GM10248 (cell line): ENCODE measurements at regions of chr20 and their contacts with region 1.

Region 1: DNA sequence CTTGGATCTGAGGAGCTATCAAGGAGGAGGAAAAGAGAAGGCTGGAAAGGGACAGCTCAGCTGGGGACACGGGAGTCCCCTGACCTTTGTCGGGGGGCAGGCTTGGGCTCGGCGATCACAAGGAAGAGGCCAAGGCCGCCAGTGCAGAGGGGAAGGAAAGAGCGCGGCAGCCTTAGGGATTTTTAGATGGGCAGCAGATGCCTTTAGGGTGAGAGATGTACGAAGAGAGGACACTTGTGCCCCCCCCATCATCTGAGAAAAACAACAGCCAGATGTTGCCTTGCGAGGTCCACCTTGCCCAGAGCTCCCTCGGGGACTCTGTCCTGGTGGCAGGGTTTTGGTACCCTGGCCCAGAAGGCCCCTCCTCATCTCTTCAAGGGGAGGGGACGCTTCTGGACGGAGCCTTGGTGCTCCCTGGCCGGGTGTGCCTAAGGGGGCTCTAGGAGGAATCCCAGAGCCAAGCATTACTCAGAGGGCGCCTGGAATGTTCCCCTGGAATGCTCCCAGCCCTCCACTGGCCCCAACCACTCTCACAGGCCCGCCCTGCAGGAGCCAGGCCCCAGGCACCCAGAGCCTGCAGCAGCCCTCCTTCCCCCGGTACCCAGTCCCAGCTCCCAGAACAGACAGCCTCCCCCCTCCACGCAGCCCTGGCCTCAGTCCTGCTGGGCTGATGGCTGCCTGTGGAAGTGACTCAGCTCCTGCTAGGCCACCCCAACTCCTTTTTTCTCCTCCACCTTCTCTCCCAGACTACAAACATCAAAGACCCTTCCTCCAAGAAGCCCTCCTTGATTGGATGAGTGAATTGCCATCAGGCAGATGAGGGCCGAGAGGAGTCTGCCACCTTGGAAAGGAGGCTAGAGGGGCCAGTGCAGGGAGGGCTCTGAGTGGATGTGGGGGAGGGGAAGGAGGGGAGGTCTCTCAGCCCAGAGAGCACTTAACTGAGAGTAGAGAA is 1.8 kb downstream of the ADAM33 start:
- DNase-seq: no peak
- CTCF ChIP-seq: no peak

Region 2: DNA sequence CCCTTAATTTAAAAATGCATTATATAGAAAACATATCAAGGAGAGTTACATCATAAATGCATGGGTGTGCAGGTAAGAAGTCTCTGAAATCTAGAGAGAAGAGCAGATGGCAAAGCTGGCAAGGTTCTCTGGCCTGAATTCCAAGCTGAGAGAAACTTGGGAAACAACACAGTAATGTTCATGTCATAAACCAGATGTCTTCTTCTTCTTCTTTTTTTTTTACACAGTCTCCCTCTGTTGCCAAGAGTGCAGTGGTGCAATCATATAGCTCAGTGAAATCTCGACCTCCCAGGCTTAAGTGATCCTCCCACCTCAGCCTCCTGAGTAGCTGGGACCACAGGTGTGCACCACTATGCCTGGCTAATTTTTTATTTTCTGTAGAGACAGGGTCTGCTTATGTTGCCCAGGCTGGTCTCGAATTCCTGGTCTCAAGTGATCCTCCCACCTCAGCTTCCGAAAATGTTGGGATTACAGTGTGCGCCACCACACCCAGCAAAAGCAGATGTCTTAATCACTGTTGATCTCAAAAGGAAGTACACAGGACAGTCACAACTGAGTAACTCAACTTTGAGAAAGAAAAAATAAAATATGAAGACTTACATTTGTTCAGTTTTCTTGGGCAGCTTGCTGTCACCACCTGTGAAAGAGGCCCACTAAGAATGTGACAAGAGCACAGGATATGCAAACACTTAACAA is 349.8 kb before region 1 on chr20:
- CTCF ChIA-PET with region 1: no interaction called
- POLR2A ChIA-PET with region 1: no interaction called
- DNase-seq: no peak
- CTCF ChIP-seq: no peak

Region 3: GRCh38 chr20:3658716-3659491 is 21.1 kb before region 1 on chr20:
- CTCF ChIA-PET with region 1: interaction called, 11 read pairs
- POLR2A ChIA-PET with region 1: no interaction called
- DNase-seq: peak; percentile 88
- CTCF ChIP-seq: no peak

Region 4: DNA sequence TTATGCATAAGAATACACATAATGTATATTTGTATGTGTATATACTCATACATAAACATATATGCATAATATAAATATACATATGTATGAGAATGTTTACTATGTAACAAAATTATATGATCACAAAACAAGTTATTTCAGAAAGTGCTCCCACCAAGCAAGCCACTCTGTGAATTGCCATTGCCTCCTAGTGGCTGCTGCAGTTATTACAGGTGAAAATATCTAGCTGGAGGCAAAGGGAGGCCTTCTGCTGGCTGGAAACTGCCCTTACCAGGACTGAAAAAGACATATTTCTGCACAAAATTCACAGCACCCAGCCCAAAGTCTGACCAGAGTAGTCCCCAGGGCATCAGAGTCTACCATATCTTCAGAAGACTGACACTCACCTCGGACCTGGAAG is 16.2 kb after region 1 on chr20:
- CTCF ChIA-PET with region 1: interaction called, 13 read pairs
- POLR2A ChIA-PET with region 1: no interaction called
- DNase-seq: no peak
- CTCF ChIP-seq: peak; percentile 17

Region 5: GRCh38 chr20:3753098-3753980 is 73.3 kb after region 1 on chr20:
- CTCF ChIA-PET with region 1: interaction called, 11 read pairs
- POLR2A ChIA-PET with region 1: no interaction called
- DNase-seq: peak; percentile 82
- CTCF ChIP-seq: peak; percentile 48

Region 6: GRCh38 chr20:3767427-3768341 is 87.7 kb after region 1 on chr20 and contains the start of gene ADISSP:
- CTCF ChIA-PET with region 1: interaction called, 13 read pairs
- POLR2A ChIA-PET with region 1: no interaction called
- DNase-seq: peak; percentile 100
- CTCF ChIP-seq: peak; percentile 21